Lower leg skin (tissue), 4 donors: ENCODE measurements at regions of chr1 and their contacts with region 1.

Region 1: DNA sequence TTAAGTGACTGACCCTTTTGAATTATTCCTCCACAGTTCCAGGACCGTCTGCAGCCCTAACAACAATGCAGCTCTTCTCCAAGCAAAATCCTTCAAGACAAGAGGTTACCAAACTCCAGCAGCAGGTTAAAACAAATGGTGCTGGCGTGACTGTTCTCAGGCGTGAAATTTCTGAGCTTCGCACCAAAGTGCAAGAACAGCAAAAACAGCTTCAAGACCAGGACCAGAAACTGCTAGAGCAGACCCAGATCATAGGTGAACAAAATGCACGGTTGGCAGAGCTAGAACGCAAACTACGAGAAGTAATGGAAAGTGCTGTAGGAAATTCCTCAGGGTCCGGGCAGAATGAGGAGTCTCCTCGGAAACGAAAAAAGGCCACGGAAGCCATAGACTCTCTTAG is 25.7 kb upstream of the DEGS1 start:
- DNase-seq: no peak
- H3K4me3 ChIP-seq: no peak overlapping the region
- CTCF ChIP-seq: no peak
- POLR2A ChIP-seq: no peak

Region 2: DNA sequence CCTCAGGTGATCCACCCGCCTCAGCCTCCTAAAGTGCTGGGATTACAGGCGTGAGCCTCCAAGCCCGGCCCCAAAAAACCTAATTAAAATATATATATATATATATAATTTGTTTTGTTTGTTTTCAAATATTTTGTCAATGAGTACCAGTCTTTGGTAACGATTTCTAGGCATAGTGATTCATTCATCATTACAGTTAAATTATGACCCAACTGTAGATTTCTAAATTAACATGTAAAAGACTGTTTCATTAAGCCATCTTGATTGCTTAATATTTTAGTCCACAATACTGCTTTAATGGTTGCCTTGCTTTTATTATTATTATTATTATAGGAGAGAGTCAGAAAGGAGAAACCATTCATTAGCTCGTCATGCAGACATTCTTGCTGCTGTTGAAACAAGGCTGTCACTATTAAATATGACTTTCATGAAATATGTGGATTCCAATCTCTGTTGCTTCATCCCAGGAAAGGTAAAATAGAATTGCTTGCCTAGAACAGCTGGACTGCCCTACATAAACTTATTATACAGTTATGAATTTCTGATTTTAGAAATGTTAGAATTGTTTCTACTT is 23.5 kb before region 1 on chr1:
- intact Hi-C with region 1: loop called (anchors 2 kb)
- DNase-seq: no peak
- H3K4me3 ChIP-seq: no peak overlapping the region
- CTCF ChIP-seq: no peak
- POLR2A ChIP-seq: no peak

Region 3: DNA sequence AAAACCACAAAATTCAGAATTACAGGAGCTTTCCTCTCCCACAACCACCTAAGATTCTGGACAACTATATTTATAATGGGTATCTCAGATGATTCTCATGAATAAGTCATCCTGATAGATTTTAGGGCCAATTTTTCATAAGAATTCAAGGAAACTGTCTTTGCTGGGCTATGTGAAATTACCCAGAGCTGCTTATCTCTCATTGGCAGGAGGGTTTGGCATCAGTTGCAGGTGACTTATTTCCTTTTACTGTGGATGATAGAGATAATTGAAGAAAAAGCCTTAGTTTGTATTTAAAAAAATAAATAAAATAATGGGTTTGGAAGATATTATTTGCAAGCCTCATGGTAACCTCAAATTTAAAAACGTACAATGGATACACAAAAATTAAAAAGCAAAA is 315.5 kb after region 1 on chr1:
- intact Hi-C with region 1: no loop called
- DNase-seq: no peak
- H3K4me3 ChIP-seq: no peak overlapping the region
- CTCF ChIP-seq: no peak
- POLR2A ChIP-seq: no peak